Heart left ventricle (tissue), 16 donors: ENCODE measurements at regions of chr2 and their contacts with region 1.

Region 1: GRCh38 chr2:177338177-177338721 is 54.3 kb upstream of the AGPS start:
- DNase-seq: no peak
- ATAC-seq: no peak
- H3K4me3 ChIP-seq: no peak overlapping the region
- H3K27ac ChIP-seq: no peak overlapping the region
- H3K4me1 ChIP-seq: no peaks in the 10 kb centered on the region
- H3K27me3 ChIP-seq: no peaks in the 10 kb centered on the region
- CTCF ChIP-seq: no peak
- POLR2A ChIP-seq: no peak

Region 2: GRCh38 chr2:177413703-177414102 is 75.5 kb after region 1 on chr2:
- intact Hi-C with region 1: loop called (anchors 1 to 5 kb)
- DNase-seq: no peak
- ATAC-seq: no peak
- H3K4me3 ChIP-seq: no peak overlapping the region
- H3K27ac ChIP-seq: no peak overlapping the region
- H3K4me1 ChIP-seq: peaks cover 0 to 37% (median 2%) of the 10 kb centered on the region in 12 donors
- H3K27me3 ChIP-seq: no peaks in the 10 kb centered on the region
- CTCF ChIP-seq: no peak
- POLR2A ChIP-seq: no peak

Region 3: GRCh38 chr2:177419274-177419673 is 81.0 kb after region 1 on chr2:
- intact Hi-C with region 1: loop called (anchors 1 to 5 kb)
- DNase-seq: no peak
- ATAC-seq: no peak
- H3K4me3 ChIP-seq: no peak overlapping the region
- H3K27ac ChIP-seq: no peak overlapping the region
- H3K4me1 ChIP-seq: peaks cover 0 to 47% (median 2%) of the 10 kb centered on the region in 12 donors
- H3K27me3 ChIP-seq: no peaks in the 10 kb centered on the region
- CTCF ChIP-seq: no peak
- POLR2A ChIP-seq: no peak

Region 4: GRCh38 chr2:177552422-177553175 is 214.3 kb after region 1 on chr2:
- intact Hi-C with region 1: no loop called
- DNase-seq: peak; percentile 87 to 92 (median 90)
- ATAC-seq: peak; percentile 97 to 99 (median 98)
- H3K4me3 ChIP-seq: peak overlapping the region; percentile 66 to 96 (median 84)
- H3K27ac ChIP-seq: peak overlapping the region; percentile 89 to 99 (median 96)
- H3K4me1 ChIP-seq: peaks cover 0 to 16% (median 4%) of the 10 kb centered on the region in 12 donors
- H3K27me3 ChIP-seq: no peaks in the 10 kb centered on the region
- CTCF ChIP-seq: peak in 2 of 12 donors; percentile 5 to 6
- POLR2A ChIP-seq: no peak

Region 5: DNA sequence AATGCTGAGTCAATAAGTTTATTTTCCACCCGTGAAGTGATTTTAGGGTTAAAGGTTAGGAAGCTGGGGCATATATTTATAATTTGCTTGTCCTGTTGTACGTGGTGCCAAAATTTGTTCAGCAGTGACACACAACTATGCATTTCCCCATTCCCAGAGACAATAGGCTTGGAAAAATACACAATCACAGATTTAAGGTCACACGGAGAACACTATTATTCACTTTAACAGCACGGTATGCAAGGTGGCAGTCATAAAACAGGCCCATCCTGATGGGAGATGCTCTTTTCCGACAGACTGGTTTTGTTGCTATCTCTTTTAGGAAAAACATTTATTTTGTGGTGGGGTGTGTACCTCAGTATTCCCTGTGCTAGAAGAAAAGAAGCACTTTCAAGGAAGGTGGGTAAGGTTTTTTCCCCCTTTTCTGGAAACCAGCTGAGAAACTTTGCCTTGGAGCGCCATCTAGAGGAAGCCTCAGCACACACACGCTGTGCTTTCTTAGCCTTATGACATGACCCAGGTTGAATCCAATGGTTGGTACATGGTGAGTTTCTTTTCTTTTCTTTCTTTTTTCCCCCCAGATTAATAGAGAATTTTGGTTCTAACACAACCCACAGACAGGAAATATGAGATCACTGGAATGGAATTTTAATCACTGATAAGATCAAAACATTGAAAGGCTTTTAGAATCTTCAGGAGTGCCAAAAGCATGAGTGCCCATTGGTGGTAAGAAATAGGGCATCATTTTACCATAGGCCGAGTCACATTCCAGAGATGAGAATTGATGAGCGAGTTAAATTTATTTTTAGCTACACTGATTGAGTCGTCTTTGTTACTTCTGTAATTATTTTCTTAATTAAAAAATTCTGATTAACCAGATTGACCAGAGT is 386.4 kb after region 1 on chr2:
- intact Hi-C with region 1: loop called in 9 of 10 experiments (anchors 1 to 10 kb)
- DNase-seq: peak in 3 of 5 donors; percentile 36 to 53 (median 40)
- ATAC-seq: peak; percentile 64 to 83 (median 74)
- H3K4me3 ChIP-seq: no peak overlapping the region
- H3K27ac ChIP-seq: peak overlapping the region in 2 of 12 donors; percentile 3 to 24
- H3K4me1 ChIP-seq: peaks cover 0 to 9% (median 0%) of the 10 kb centered on the region in 12 donors
- H3K27me3 ChIP-seq: peaks cover 0 to 5% (median 0%) of the 10 kb centered on the region in 9 donors
- CTCF ChIP-seq: peak; percentile 80 to 95 (median 86)
- POLR2A ChIP-seq: no peak

Region 6: DNA sequence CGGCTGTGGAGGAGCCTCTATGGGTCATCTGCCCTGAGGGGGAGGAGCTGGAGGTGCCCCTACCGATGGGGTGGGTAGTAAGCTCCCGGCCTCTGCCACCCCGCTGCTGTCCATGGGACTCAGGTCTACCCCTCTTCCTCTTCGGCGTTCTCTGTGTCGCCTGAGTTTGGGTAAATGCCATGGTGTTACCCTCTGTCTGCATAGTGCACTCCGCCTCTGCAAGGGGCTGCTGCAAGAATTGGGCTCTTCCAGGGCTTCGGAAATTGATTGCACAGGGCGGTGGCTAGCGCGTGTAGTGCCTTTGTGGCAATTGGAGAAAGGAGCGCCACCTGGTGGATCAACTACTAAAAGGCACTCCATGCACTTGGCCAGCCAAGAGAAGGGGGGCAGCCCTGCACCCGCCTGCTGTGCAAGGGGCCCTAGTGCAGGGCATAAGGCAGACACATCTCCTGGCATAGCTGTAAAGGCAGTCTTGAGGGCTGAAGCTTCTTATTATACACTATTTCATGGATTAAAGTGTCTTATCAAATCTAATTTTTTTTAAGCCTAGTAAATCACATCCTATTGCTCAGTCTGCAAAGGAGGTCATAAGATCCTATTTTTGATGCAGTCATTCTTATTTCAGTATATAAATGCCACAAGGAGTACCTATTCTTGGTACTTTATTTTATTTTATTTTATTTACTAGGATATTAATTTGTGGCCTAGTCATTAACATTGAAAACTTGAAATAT is 425.4 kb after region 1 on chr2:
- intact Hi-C with region 1: loop called (anchors 2 to 10 kb)
- DNase-seq: peak; percentile 70 to 81 (median 74)
- ATAC-seq: peak; percentile 49 to 89 (median 86)
- H3K4me3 ChIP-seq: peak overlapping the region in 1 of 12 donors; percentile 24
- H3K27ac ChIP-seq: no peak overlapping the region
- H3K4me1 ChIP-seq: peaks cover 0 to 15% (median 2%) of the 10 kb centered on the region in 12 donors
- H3K27me3 ChIP-seq: no peaks in the 10 kb centered on the region
- CTCF ChIP-seq: peak; percentile 74 to 90 (median 82)
- POLR2A ChIP-seq: no peak